ENCODE measurements at regions of chrX and their contacts with region 1.

Region 1: GRCh38 chrX:50081282-50081889 is 119.4 kb downstream of the AKAP4 start:
- DNase-seq: no peak
- H3K4me3 Mint-ChIP-seq: no peak overlapping the region
- H3K27ac Mint-ChIP-seq: no peak overlapping the region
- H3K4me1 Mint-ChIP-seq: peaks cover 6% of the 10 kb centered on the region
- H3K27me3 Mint-ChIP-seq: no peaks in the 10 kb centered on the region

Region 2: GRCh38 chrX:49915361-49916222 is 165.8 kb before region 1 on chrX:
- intact Hi-C with region 1: loop called (anchors 2 kb)
- DNase-seq: peak; percentile 18
- H3K4me3 Mint-ChIP-seq: no peak overlapping the region
- H3K27ac Mint-ChIP-seq: no peak overlapping the region
- H3K4me1 Mint-ChIP-seq: peaks cover under 1% of the 10 kb centered on the region
- H3K27me3 Mint-ChIP-seq: no peaks in the 10 kb centered on the region

Region 3: GRCh38 chrX:50045823-50046222 is 35.6 kb before region 1 on chrX:
- intact Hi-C with region 1: no loop called
- DNase-seq: no peak
- H3K4me3 Mint-ChIP-seq: no peak overlapping the region
- H3K27ac Mint-ChIP-seq: no peak overlapping the region
- H3K4me1 Mint-ChIP-seq: no peaks in the 10 kb centered on the region
- H3K27me3 Mint-ChIP-seq: no peaks in the 10 kb centered on the region

Measured in activated T-helper 2 cell treated with anti-CD3 and anti-CD28 coated beads, Interferon-gamma antibody, Interleukin-2, Interleukin-4, amounts not matched to agents 10 μg/mL and 5 μg/mL and 100 μg/mL, durations not matched to agents 14 hours and 24 hours and 36 hours (primary cell).